CD4-positive, alpha-beta T cell (primary cell): ENCODE measurements at regions of chr11 and their contacts with region 1.

Region 1: DNA sequence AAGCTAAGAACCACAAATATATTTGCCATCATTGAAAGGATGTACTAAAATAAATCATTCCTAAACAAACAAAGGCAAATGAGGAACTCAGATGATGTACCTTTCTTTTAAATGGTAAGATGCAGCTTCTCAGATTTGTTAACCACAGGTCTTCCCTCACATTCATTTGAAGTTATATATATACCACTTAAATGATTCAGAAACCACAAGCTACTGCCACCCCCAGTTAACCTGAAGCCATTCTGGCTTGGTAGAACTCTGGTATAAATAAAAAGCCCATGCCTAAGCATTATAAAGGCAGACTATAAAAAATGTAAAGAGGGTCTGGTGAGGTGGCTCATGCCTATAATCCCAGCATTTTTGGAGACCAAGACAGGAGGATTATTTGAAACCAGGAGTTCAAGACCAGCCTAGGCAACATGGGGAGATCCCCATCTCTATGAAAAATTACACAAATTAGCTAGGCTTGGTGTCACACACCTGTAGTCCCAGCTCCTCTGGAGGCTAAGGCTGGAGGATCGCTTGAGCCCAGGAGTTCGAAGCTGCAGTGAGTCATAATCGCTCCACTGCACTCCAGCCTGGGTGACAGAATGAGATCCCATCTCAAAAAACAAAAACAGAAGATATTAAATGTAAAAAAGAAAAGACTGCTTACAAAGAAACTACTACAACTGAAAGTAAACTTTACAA is 1185.3 kb downstream of the JRKL start:
- DNase-seq: no peak
- ATAC-seq: no peak
- H3K4me3 ChIP-seq: no peak overlapping the region
- H3K4me3 Mint-ChIP-seq: no peak overlapping the region
- H3K27ac ChIP-seq: no peak overlapping the region
- H3K27ac Mint-ChIP-seq: no peak overlapping the region
- H3K4me1 ChIP-seq: no peaks in the 10 kb centered on the region
- H3K4me1 Mint-ChIP-seq: no peaks in the 10 kb centered on the region
- H3K27me3 ChIP-seq: no peaks in the 10 kb centered on the region
- H3K27me3 Mint-ChIP-seq: no peaks in the 10 kb centered on the region
- CTCF ChIP-seq: no peak

Region 2: DNA sequence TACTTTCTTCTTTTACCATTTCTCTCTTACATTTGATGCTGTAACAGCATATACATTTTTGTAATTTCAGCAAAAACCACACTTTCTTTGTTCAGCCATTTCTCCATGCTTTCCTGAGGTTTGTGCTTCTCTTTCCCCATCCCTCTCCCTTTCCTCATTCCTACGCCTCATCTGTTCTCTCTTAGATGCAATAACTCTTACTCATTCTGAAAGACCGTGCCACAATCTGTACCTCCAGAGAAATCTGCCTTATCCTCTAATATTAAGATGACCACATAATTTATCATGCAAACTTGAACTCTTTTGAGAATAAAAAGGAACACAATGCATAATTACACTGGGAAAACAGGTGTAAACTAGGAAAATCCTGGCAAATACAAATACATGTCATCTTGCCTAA is 596.4 kb before region 1 on chr11:
- CTCF ChIA-PET with region 1: no interaction called
- POLR2A ChIA-PET with region 1: no interaction called
- intact Hi-C with region 1: no loop called
- DNase-seq: no peak
- ATAC-seq: no peak
- H3K4me3 ChIP-seq: no peak overlapping the region
- H3K4me3 Mint-ChIP-seq: no peak overlapping the region
- H3K27ac ChIP-seq: no peak overlapping the region
- H3K27ac Mint-ChIP-seq: no peak overlapping the region
- H3K4me1 ChIP-seq: no peaks in the 10 kb centered on the region
- H3K4me1 Mint-ChIP-seq: no peaks in the 10 kb centered on the region
- H3K27me3 ChIP-seq: no peaks in the 10 kb centered on the region
- H3K27me3 Mint-ChIP-seq: no peaks in the 10 kb centered on the region
- CTCF ChIP-seq: no peak

Region 3: DNA sequence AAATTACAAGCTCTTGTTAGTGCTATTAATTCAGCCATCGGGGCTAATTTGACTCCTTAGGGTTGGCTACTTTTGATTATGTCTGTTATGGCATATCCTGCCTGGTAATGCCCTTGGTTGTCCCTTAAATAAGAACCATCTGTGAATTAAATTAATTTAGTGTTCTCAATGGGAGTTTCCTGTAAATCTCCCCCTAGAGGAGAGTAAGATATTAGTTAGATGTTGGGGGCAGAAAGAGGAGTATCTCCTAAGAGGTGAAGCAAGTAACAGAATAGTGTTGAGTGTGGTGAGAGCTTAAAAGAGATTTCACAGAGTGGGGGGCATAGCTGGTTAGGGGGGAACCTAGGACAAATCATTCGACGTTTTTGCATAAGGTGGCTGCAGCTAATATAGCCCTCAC is 58.4 kb before region 1 on chr11:
- CTCF ChIA-PET with region 1: no interaction called
- POLR2A ChIA-PET with region 1: no interaction called
- intact Hi-C with region 1: loop called in 1 of 2 experiments (anchors 10 kb)
- DNase-seq: no peak
- ATAC-seq: no peak
- H3K4me3 ChIP-seq: no peak overlapping the region
- H3K4me3 Mint-ChIP-seq: no peak overlapping the region
- H3K27ac ChIP-seq: no peak overlapping the region
- H3K27ac Mint-ChIP-seq: no peak overlapping the region
- H3K4me1 ChIP-seq: no peaks in the 10 kb centered on the region
- H3K4me1 Mint-ChIP-seq: no peaks in the 10 kb centered on the region
- H3K27me3 ChIP-seq: no peaks in the 10 kb centered on the region
- H3K27me3 Mint-ChIP-seq: no peaks in the 10 kb centered on the region
- CTCF ChIP-seq: no peak